Colonic mucosa (tissue), 4 donors: ENCODE measurements at regions of chr1 and their contacts with region 1.

Region 1: DNA sequence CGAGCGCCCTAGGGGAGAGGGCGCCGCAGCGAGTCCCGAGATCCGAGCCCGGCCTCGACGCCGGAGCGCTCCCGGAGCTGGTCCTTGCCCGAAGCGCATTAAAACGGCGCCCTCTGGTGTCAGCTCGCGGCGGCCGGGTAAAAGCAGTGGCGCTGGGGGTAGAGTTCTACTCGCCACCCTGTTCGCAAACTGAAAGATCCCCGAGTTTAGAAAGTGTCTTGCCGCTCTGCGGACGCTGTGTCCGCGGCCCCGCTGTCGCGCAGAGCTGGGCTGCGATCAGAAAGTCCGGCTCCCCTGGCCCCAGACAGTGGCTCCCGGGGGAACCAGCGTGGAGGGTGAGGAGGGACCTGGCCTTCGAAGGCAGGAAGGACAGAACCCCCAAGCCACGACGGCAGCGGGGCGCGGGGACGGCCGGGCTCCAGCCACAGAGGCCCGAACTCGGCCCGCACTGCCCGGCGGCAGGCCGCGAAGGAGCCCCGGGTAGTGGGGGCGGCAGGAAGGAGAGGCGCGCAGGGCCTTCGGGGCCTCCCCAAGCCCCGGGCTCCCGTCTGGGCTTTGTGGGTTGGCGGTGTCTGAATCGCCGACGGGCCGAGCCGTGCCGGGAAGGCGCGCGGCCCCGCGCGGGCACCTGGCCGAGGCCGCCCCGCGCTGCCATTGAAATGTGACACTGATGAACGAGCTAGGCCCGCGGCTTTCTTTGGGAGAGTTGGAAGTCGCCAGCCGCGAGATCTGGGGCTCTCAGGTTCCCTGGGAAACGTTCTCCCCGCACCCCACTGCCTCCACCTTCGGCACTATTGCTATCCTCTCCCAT is 39.1 kb upstream of the NFIA start:
- DNase-seq: peak; percentile 93
- H3K4me3 ChIP-seq: peak overlapping the region; percentile 22
- H3K27ac ChIP-seq: no peak overlapping the region
- H3K4me1 ChIP-seq: no peaks in the 10 kb centered on the region
- H3K27me3 ChIP-seq: no peaks in the 10 kb centered on the region
- CTCF ChIP-seq: peak; percentile 77

Region 2: DNA sequence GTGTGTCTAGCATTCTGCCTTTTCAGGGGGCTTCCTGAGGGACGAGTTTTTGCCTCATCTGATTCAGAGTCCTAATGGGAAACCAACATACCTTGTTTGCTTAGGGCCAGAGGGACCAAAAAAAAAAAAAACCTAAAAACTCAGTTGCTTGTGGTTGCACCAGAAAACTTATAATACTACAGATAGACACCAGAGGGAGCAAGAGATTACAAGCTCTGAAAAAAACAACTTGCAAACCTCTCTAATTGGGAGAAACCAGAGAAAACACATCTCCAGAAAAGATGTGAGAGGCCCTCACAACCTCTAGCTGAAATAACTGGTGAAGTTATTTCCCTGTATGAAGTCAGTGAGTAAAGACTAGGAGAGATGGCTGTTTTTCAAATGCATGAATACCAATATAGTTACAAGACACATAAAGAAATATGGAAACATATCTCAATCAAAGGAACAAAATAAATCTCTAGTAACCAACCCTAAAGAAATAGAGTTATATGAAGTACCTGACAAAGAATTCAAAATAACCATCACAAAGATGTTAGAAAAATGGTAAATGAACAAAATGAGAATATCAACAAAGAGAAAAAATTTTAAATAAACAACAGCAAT is 194.5 kb before region 1 on chr1:
- intact Hi-C with region 1: loop called (anchors 2 kb)
- DNase-seq: no peak
- H3K4me3 ChIP-seq: no peak overlapping the region
- H3K27ac ChIP-seq: no peak overlapping the region
- H3K4me1 ChIP-seq: no peaks in the 10 kb centered on the region
- H3K27me3 ChIP-seq: no peaks in the 10 kb centered on the region
- CTCF ChIP-seq: peak; percentile 40

Region 3: GRCh38 chr1:60984062-60984799 is 59.0 kb before region 1 on chr1:
- intact Hi-C with region 1: loop called (anchors 5 kb)
- DNase-seq: no peak
- H3K4me3 ChIP-seq: no peak overlapping the region
- H3K27ac ChIP-seq: no peak overlapping the region
- H3K4me1 ChIP-seq: no peaks in the 10 kb centered on the region
- H3K27me3 ChIP-seq: no peaks in the 10 kb centered on the region
- CTCF ChIP-seq: no peak